ENCODE measurements at regions of chr10 and their contacts with region 1.

Region 1: DNA sequence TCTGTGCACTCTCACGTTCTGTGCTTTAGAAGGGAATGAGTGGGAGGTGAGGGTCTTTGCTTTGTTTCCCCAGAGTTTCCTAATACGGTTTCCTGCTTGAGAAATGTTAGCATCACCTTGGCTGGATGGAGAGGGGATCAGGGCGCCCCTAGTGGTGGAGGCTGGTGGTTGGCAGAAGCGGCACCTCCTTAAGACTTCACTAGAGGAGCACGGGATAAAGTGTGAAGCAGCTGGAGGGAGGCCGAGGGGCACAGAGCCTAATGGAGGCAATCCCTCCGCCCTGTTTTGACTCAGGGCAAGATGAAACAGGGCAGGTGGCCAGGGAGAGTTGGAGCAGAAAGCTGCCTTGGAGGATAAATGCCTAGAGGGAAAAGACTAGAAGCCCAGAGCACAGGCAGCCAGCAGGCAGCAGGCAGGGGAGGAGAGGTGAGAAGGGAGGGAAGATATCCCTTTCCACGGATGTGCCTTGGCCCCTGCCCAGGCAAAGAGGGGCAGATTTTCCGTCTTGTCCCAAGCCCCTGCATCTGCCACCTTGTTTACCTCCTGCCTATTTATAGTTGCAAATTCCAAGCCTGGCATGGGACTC is 56.0 kb upstream of the BTRC start:
- DNase-seq: peak; percentile 58
- H3K4me3 Mint-ChIP-seq: no peak overlapping the region
- H3K27ac Mint-ChIP-seq: no peak overlapping the region
- H3K4me1 Mint-ChIP-seq: no peaks in the 10 kb centered on the region
- H3K27me3 Mint-ChIP-seq: peaks cover 44% of the 10 kb centered on the region

Region 2: GRCh38 chr10:101285519-101286070 is 12.4 kb before region 1 on chr10:
- intact Hi-C with region 1: no loop called
- DNase-seq: no peak
- H3K4me3 Mint-ChIP-seq: no peak overlapping the region
- H3K27ac Mint-ChIP-seq: no peak overlapping the region
- H3K4me1 Mint-ChIP-seq: no peaks in the 10 kb centered on the region
- H3K27me3 Mint-ChIP-seq: peaks cover 75% of the 10 kb centered on the region

Region 3: DNA sequence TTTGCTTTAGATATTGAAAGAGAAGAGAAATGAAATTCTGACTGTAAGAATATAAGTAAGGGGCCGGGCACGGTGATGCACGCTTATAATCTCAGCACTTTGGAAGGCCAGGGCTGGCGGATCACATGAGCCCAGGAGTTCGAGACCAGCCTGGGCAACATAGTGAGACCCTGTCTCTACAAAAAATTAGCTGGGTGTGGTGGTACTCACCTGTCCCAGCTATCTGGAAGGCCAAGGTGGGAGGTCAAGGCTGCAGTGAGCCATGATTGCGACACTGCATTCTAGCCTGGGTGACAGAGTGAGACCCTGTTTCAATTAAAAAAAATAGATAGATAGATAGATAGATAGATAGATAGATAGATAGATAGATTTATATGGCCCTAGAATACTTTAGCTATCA is 138.3 kb after region 1 on chr10:
- intact Hi-C with region 1: no loop called
- DNase-seq: no peak
- H3K4me3 Mint-ChIP-seq: no peak overlapping the region
- H3K27ac Mint-ChIP-seq: no peak overlapping the region
- H3K4me1 Mint-ChIP-seq: no peaks in the 10 kb centered on the region
- H3K27me3 Mint-ChIP-seq: no peaks in the 10 kb centered on the region

Region 4: GRCh38 chr10:101453791-101454718 is 156.1 kb after region 1 on chr10:
- intact Hi-C with region 1: no loop called
- DNase-seq: no peak
- H3K4me3 Mint-ChIP-seq: no peak overlapping the region
- H3K27ac Mint-ChIP-seq: peak overlapping the region; percentile 68
- H3K4me1 Mint-ChIP-seq: peaks cover 35% of the 10 kb centered on the region
- H3K27me3 Mint-ChIP-seq: peaks cover 26% of the 10 kb centered on the region

Region 5: GRCh38 chr10:101569838-101570766 is 272.1 kb after region 1 on chr10:
- intact Hi-C with region 1: loop called (anchors 5 kb)
- DNase-seq: peak; percentile 70
- H3K4me3 Mint-ChIP-seq: peak overlapping the region; percentile 71
- H3K27ac Mint-ChIP-seq: no peak overlapping the region
- H3K4me1 Mint-ChIP-seq: peaks cover 13% of the 10 kb centered on the region
- H3K27me3 Mint-ChIP-seq: peaks cover 44% of the 10 kb centered on the region